GM10248 (cell line): ENCODE measurements at regions of chr1 and their contacts with region 1.

Region 1: GRCh38 chr1:24987875-24988557 is 57.9 kb upstream of the RUNX3 start:
- DNase-seq: peak; percentile 70
- CTCF ChIP-seq: no peak

Region 2: DNA sequence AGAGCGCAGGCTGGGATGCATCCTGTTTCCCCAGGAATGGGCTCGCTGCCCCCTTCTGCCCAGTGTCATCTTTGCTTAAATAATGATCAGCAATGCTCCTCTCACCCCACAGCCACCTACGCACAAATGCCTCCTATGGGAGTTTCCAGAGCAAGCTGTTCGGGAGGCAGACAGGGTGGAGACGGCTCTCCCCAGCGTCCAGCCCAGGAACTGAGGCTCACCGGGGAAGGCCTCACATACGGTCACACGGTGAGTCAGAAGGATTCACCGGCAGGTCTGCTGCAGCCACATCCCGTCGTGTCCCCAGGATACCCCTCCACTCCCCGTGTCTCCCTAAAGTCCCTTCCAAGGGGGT is 17.6 kb before region 1 on chr1:
- CTCF ChIA-PET with region 1: interaction called, 28 read pairs
- POLR2A ChIA-PET with region 1: no interaction called
- DNase-seq: no peak
- CTCF ChIP-seq: no peak

Region 3: GRCh38 chr1:25006770-25007169 is 18.8 kb after region 1 on chr1:
- CTCF ChIA-PET with region 1: interaction called, 12 read pairs
- POLR2A ChIA-PET with region 1: no interaction called
- DNase-seq: no peak
- CTCF ChIP-seq: no peak